ENCODE measurements at regions of chr17 and their contacts with region 1.

Region 1: DNA sequence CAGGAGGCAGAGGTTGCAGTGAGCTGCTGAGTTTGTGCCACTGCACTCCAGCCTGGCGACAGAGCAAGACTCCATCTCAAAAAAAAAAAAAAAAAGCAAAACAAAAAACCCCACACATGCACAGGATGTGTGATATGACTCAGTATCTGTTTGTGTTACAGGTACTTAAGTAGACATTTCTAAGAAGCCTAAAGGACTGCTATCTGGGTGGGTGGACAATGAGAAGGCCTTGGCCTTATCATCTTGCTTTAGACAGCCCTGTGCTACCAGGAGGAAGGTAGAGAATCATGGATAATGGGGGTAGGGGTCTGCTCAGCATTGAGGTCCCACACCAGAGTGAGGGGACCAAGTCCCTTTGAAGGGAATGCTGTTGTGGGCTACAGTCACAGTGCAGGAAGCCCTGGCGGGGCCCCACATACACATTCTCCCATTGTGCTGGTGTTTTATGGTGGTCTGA is 26.7 kb downstream of the PLD6 start:
- DNase-seq: peak; percentile 60
- ATAC-seq: peak; percentile 76
- H3K4me3 Mint-ChIP-seq: peak overlapping the region; percentile 79
- H3K27ac Mint-ChIP-seq: peak overlapping the region; percentile 95
- H3K4me1 Mint-ChIP-seq: peaks cover 58% of the 10 kb centered on the region
- H3K27me3 Mint-ChIP-seq: no peaks in the 10 kb centered on the region

Region 2: GRCh38 chr17:17206124-17206912 is 26.9 kb after region 1 on chr17 and contains the start of gene PLD6:
- POLR2A ChIA-PET with region 1: interaction called, 10 read pairs
- DNase-seq: peak; percentile 89
- ATAC-seq: peak; percentile 59
- H3K4me3 Mint-ChIP-seq: peak within 1 kb of the TSS; percentile 87
- H3K27ac Mint-ChIP-seq: peak within 1 kb of the TSS; percentile 86
- H3K4me1 Mint-ChIP-seq: peaks cover 12% of the 10 kb centered on the region
- H3K27me3 Mint-ChIP-seq: no peaks in the 10 kb centered on the region
- total RNA-seq, gene PLD6: 5.5 to 6.3 TPM

Measured in activated naive CD8-positive, alpha-beta T cell treated with anti-CD3 and anti-CD28 coated beads, Interleukin-2, amount 10 ng/mL, durations not matched to agents 7 days and 5 days (primary cell).